ENCODE measurements at regions of chr19 and their contacts with region 1.

Region 1: GRCh38 chr19:34041925-34042521 is 130.3 kb upstream of the LSM14A start:
- DNase-seq: peak; percentile 82
- H3K4me3 Mint-ChIP-seq: no peak overlapping the region
- H3K27ac Mint-ChIP-seq: no peak overlapping the region
- H3K4me1 Mint-ChIP-seq: no peaks in the 10 kb centered on the region
- H3K27me3 Mint-ChIP-seq: no peaks in the 10 kb centered on the region

Region 2: DNA sequence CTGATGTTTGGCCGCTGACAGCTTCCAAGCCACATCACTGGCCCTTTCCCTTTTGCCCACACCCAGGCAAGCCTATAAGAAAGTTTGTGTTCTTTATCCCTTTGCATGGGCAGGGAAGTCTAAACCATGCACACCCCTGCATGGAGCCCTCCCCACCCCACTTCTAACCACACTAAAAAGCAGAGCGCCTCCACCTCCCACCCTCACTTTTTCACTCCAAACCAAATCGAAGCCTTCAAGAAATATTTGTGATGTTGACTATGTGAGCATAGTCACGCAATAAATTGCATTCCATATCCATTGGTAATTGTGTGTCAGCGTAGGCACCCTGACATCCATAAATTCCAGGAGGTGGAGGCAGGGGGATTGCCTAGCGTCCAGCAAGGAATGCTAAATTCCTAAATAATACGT is 25.8 kb after region 1 on chr19:
- CTCF ChIA-PET with region 1: no interaction called
- DNase-seq: no peak
- H3K4me3 Mint-ChIP-seq: no peak overlapping the region
- H3K27ac Mint-ChIP-seq: no peak overlapping the region
- H3K4me1 Mint-ChIP-seq: no peaks in the 10 kb centered on the region
- H3K27me3 Mint-ChIP-seq: peaks cover 11% of the 10 kb centered on the region

Region 3: DNA sequence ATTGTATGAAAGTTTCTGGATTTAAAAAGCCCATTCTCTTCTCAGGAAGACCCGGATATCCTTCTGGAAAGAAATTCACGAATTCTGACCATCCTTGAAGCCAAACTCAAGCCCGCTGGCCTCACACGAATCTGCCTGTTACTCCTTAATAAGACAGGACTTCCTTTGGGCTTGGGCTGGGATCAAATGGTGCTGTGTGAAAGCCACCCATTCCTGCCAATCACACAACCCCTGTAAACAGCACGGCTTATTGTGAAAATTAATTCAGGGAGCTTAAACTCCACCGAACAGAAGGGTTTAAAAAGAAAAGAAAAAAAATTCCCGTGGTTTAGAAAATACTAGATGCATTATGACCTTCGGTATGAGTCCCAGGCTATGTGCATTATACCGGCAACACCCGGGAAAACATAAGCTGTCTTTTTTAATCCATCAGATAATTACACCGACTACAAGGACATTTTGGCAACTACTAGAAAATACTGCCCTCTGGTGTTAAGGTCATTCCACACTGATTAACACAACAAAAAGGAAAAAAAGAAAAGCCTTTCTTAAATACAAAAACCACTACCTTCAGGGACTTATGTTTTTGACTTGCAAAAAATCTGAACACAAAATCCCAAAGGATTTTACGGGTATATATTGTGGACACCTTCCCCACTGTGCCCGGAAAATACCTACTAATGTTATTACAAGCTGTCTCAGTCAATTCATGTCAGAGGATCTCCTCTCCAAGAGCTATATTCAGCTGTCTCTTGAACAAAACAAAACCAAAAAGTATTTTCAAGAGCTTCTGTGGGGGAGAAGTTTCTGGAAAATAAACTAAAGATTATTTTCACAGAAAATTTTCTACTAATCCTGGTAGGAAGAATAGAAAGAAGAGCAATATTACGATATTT is 54.2 kb after region 1 on chr19:
- CTCF ChIA-PET with region 1: interaction called, 16 read pairs
- DNase-seq: no peak
- H3K4me3 Mint-ChIP-seq: no peak overlapping the region
- H3K27ac Mint-ChIP-seq: no peak overlapping the region
- H3K4me1 Mint-ChIP-seq: no peaks in the 10 kb centered on the region
- H3K27me3 Mint-ChIP-seq: peaks cover 21% of the 10 kb centered on the region

Region 4: DNA sequence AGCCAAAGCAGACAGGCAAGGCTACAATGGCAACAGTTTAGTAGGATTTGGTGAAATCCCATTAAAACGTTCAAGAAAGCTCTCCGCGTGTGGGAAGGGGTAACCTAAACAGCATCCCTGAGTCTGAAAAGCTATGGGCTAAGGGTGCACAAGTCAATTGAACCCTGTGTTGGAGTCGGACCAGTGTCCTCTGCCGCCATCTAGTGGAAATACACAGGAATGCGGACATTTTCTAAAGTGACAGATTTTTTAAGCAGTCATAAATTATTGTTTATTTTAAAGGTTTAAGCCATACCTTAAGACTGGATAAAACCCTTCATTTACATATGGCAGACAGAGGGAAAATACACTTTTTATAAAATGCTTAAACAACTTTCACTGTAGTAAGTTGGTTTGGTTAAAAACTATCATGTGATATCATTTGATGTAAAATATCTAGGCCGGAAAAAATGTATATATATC is 103.7 kb after region 1 on chr19:
- CTCF ChIA-PET with region 1: interaction called, 31 read pairs
- DNase-seq: peak; percentile 73
- H3K4me3 Mint-ChIP-seq: no peak overlapping the region
- H3K27ac Mint-ChIP-seq: no peak overlapping the region
- H3K4me1 Mint-ChIP-seq: no peaks in the 10 kb centered on the region
- H3K27me3 Mint-ChIP-seq: peaks cover 8% of the 10 kb centered on the region

Measured in activated naive CD4-positive, alpha-beta T cell treated with anti-CD3 and anti-CD28 coated beads, Interleukin-2, amount 10 ng/mL, durations not matched to agents 7 days and 5 days (primary cell).